ENCODE measurements at regions of chr18 and their contacts with region 1.

Region 1: GRCh38 chr18:23515911-23516546 is 12.7 kb downstream of the RMC1 start:
- DNase-seq: peak; percentile 79
- H3K4me3 Mint-ChIP-seq: no peak overlapping the region
- H3K27ac Mint-ChIP-seq: peak overlapping the region; percentile 40
- H3K4me1 Mint-ChIP-seq: peaks cover 26% of the 10 kb centered on the region
- H3K27me3 Mint-ChIP-seq: no peaks in the 10 kb centered on the region

Region 2: GRCh38 chr18:23071285-23071684 is 444.7 kb before region 1 on chr18:
- CTCF ChIA-PET with region 1: no interaction called
- POLR2A ChIA-PET with region 1: no interaction called
- DNase-seq: peak; percentile 93
- H3K4me3 Mint-ChIP-seq: peak overlapping the region; percentile 69
- H3K27ac Mint-ChIP-seq: peak overlapping the region; percentile 88
- H3K4me1 Mint-ChIP-seq: peaks cover 62% of the 10 kb centered on the region
- H3K27me3 Mint-ChIP-seq: no peaks in the 10 kb centered on the region

Region 3: DNA sequence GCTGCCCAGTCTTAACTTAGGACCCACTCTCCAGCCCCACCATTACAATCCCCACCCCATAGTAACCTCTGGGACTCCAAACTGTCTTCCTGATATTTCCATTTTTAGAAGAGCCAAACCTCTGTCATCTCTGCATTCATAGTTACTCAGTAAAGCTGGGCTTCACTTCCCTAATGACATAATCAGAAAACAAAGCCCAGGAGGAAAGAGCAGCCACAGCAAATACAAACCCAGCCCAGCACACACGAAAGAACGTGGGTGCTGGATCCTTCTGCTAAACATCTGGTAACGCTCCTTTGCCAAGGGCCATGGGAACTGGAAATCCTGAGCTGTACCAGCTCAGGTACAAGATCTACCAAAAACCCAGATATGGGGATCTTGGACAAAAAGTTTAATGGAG is 99.7 kb before region 1 on chr18:
- CTCF ChIA-PET with region 1: no interaction called
- POLR2A ChIA-PET with region 1: no interaction called
- DNase-seq: no peak
- H3K4me3 Mint-ChIP-seq: no peak overlapping the region
- H3K27ac Mint-ChIP-seq: no peak overlapping the region
- H3K4me1 Mint-ChIP-seq: no peaks in the 10 kb centered on the region
- H3K27me3 Mint-ChIP-seq: no peaks in the 10 kb centered on the region

Region 4: DNA sequence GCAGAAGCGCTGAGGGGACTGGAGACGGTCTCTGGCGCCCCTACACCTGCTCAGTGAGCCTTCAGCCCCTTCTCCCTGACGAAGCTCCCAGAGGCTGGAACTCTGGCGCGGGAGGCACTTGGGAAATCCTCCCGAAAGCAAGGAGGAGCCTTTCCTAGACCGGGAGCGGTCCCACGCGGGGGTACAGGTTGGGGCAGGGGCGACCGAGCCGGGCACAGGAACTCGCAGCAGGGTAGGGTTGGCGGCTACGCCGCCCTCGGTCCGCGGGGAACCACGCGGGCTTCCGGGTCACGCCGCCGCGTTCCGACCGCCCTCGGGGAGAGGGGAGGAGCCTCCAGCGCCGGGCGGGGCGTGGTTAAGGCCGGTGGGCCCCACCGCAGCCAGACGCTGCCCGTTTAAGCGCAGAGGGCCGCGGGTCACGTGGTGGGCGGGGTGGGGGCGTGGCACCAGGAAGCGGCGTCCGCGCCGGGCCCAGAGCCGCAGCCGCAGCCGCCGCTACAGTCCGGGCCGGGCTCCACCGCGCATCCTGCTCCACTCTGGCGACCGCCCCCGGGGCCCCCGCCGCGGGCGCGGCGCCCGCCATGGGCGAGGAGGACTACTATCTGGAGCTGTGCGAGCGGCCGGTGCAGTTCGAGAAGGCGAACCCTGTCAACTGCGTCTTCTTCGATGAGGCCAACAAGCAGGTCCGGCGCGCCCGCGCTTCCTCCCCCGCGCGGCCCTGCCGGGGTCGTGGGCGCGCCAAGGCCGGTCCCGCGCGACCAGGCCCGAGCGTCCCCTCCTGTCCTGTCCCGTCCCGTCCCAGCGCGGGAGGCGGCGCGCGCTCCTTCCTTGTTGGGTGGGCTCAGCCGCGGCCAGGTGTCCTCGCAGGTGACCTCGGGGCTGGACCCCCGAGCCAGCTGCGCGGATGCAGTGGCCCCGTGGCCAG is 12.7 kb before region 1 on chr18 and contains the start of gene RMC1:
- CTCF ChIA-PET with region 1: interaction called, 14 read pairs
- POLR2A ChIA-PET with region 1: interaction called, 5 read pairs
- DNase-seq: peak; percentile 97
- H3K4me3 Mint-ChIP-seq: peak within 1 kb of the TSS; percentile 86
- H3K27ac Mint-ChIP-seq: peak within 1 kb of the TSS; percentile 79
- H3K4me1 Mint-ChIP-seq: peaks cover 46% of the 10 kb centered on the region
- H3K27me3 Mint-ChIP-seq: no peaks in the 10 kb centered on the region
- total RNA-seq, gene RMC1: 54.9 to 55.9 TPM

Region 5: GRCh38 chr18:23526511-23527063 is 10.6 kb after region 1 on chr18:
- CTCF ChIA-PET with region 1: interaction called, 12 read pairs
- POLR2A ChIA-PET with region 1: interaction called, 3 read pairs
- DNase-seq: no peak
- H3K4me3 Mint-ChIP-seq: no peak overlapping the region
- H3K27ac Mint-ChIP-seq: no peak overlapping the region
- H3K4me1 Mint-ChIP-seq: peaks cover 12% of the 10 kb centered on the region
- H3K27me3 Mint-ChIP-seq: no peaks in the 10 kb centered on the region

Region 6: GRCh38 chr18:23540867-23541266 is 24.8 kb after region 1 on chr18:
- CTCF ChIA-PET with region 1: interaction called, 10 read pairs
- POLR2A ChIA-PET with region 1: interaction called, 3 read pairs
- DNase-seq: peak; percentile 40
- H3K4me3 Mint-ChIP-seq: peak overlapping the region; percentile 2
- H3K27ac Mint-ChIP-seq: peak overlapping the region; percentile 70
- H3K4me1 Mint-ChIP-seq: peaks cover 40% of the 10 kb centered on the region
- H3K27me3 Mint-ChIP-seq: no peaks in the 10 kb centered on the region

Region 7: DNA sequence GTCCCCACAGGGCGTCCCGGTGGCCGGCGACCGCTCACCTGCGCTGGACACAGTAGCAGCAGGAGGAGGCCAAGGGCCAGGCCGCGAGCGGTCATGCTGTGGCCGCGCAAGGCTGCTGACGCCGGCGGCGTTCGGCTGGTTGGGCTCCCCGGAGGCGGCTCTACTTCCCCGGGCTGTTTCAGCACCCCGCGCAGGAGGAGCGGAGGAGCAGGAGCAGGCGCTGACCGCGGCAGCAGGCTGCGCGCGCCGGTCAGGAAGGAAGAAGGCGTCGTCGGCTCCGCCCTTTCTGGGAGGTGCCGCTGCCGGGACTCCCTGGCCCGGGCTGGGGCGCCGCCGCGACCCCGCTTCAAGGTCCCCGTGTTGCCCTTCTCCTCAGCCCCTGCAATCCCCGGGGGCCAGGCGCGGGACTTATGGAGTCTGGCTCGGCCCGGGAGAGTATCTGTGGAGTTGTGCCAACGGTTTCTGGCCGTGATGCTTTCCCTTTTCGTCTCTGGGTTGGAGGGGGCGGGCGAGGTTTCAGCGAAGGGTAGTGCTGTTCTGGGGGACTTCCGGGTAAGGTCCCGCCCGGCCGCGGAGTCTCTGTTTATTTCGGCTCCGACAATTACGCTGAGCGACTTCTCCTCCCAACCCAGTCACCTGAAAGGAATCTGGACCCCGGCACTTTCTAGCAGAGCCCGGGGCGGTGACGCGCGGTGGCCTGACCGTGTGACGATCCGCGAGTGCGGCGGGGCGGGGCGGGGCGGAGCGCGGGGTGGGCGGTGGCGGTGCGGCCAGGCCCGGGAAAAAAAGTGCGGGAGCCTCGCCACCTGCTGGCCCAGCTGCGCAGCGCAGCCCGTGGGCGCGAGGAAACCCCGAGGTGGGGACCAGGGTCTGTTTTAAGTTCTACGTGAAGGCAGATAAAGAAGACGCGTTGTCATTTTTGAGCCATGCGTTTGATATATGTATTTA is 70.5 kb after region 1 on chr18 and contains the start of gene NPC1:
- CTCF ChIA-PET with region 1: interaction called, 64 read pairs
- POLR2A ChIA-PET with region 1: interaction called, 6 read pairs
- DNase-seq: peak; percentile 94
- H3K4me3 Mint-ChIP-seq: peak within 1 kb of the TSS; percentile 92
- H3K27ac Mint-ChIP-seq: peak within 1 kb of the TSS; percentile 92
- H3K4me1 Mint-ChIP-seq: peaks cover 43% of the 10 kb centered on the region
- H3K27me3 Mint-ChIP-seq: peaks cover 1% of the 10 kb centered on the region
- total RNA-seq, gene NPC1: 39.8 to 44.8 TPM

Region 8: DNA sequence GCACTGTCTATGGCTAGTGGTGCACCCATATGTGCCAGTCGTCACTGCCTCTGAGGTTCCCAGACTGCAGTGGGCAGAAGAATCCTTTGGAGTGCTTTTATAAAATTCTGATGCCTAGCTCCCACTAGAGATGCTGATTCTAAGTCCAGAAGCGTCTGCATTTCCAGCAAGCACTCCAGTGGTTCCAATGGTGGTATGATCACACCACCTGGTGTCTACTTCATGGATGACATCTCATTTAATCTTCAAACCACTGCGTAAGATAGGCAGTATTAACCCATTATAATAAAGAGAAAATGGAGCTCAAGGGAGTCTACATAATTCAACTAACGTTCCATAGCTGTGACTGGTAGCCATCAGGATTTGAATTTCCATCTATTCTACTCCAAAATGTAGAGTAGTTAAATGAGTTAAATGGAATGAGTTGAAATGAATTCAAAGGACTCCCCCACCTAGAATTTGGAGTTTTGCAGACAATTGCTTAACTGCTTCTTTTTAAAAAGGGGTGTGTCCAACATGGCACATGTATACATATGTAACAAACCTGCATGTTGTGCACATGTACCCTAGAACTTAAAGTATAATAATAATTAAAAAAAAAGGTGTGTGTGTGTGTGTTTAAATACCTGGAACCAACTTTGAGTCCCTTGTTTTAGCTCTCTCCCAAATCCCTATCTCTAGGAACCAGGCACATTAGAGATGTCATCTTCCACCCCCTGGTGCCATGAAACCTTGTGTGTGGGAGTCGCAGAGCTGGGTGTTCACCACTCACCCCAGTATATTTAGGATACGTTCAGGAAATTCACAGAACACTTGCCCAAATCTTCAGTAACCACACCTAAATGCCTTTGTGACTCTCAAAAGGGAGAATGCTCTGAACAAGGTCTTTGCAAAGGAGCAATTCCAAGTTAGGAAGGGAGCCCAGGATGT is 187.3 kb after region 1 on chr18:
- CTCF ChIA-PET with region 1: interaction called, 10 read pairs
- POLR2A ChIA-PET with region 1: no interaction called
- DNase-seq: peak; percentile 22
- H3K4me3 Mint-ChIP-seq: no peak overlapping the region
- H3K27ac Mint-ChIP-seq: no peak overlapping the region
- H3K4me1 Mint-ChIP-seq: peaks cover 2% of the 10 kb centered on the region
- H3K27me3 Mint-ChIP-seq: peaks cover 47% of the 10 kb centered on the region